Dendritic cell treated with granulocyte-macrophage colony-stimulating factor and Interleukin-4, amounts not matched to agents 40 ng/mL and 50 ng/mL, for 4 days (primary cell): ENCODE measurements at regions of chr9 and their contacts with region 1.

Region 1: DNA sequence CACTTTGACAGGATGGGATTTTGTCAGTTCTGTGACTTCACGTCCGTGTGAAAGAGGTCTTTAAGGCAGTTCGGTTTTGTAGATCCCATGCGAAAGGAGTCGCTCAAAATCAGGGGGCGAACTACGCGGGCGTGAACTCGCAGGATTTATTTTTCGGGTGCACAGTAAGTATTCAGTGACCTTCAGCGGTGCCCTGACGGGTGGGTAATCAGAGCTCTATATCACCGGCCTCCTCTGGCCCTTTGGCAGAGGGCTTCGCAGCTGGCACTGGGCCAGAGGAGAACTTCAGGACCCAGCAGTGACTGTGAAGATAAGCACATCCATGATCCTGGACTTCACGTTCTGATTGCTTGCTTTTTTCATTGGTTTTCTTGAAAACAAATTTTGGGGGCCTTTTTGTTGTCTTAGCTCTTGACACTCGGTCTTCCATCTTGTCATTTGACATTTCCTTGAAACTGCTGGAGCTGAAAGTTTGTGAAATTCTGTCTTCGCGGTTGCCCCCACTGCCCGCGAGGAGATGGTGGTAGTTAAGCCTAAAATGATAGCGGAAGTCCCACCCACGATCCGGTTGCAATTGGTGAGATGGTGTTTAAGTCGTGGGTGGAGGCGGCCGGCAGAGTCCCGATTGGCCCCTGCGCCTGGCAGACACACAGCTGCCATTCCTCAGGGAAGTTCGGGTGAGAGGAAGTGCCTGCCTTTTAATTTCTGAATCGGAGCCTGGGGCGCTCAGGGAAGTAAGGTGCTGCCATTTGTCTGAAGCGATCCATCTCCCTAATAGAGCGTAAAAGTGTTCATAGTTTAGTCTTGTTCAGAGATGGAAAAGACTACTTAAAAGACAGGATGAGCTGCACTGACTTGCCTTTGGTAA is at the start of gene FAM120AOS:
- H3K4me3 Mint-ChIP-seq: peak within 1 kb of the TSS; percentile 87
- H3K27ac Mint-ChIP-seq: peak within 1 kb of the TSS; percentile 91
- H3K4me1 Mint-ChIP-seq: peaks cover 47% of the 10 kb centered on the region
- H3K27me3 Mint-ChIP-seq: no peaks in the 10 kb centered on the region

Region 2: DNA sequence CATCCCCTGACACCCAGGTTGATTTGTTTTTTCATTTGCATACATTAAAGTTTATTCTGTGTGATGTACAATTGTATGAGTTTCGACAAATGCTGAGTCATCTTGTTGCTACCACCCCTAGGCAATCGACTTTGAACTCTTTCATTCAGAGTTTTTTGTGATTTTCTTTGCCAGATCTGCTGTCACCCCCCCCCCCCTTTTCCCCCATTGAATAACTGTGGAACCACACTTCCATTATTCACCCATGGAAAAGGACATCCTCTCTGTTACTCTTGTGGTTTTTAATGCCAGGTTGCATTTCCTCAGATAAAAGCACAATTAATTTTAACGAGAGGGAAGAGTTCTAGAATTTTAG is 13.8 kb after region 1 on chr9:
- intact Hi-C with region 1: loop called (anchors 2 kb)
- H3K4me3 Mint-ChIP-seq: no peak overlapping the region
- H3K27ac Mint-ChIP-seq: peak overlapping the region; percentile 37
- H3K4me1 Mint-ChIP-seq: peaks cover 65% of the 10 kb centered on the region
- H3K27me3 Mint-ChIP-seq: no peaks in the 10 kb centered on the region

Region 3: DNA sequence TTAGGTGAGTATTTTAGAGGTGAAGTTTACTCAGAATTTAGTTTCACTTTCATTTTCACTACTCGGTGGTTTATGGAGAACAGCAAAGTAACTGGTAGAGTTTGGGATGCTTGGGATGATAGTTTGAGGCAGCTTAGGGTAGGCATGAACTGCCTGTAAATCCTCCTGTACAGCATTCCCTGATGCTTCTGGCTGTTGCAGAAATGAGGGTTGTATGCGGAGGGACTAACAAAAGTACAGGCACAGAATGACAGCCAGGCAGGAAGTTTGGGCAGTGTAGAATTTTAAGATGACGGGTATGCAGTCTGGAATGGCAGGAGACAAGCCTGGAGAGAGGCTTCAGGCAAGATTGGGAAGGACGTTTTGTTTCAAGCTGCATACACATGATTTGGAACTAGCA is 48.1 kb after region 1 on chr9:
- intact Hi-C with region 1: loop called (anchors 1 kb)
- H3K4me3 Mint-ChIP-seq: peak overlapping the region; percentile 62
- H3K27ac Mint-ChIP-seq: peak overlapping the region; percentile 50
- H3K4me1 Mint-ChIP-seq: peaks cover 59% of the 10 kb centered on the region
- H3K27me3 Mint-ChIP-seq: no peaks in the 10 kb centered on the region

Region 4: DNA sequence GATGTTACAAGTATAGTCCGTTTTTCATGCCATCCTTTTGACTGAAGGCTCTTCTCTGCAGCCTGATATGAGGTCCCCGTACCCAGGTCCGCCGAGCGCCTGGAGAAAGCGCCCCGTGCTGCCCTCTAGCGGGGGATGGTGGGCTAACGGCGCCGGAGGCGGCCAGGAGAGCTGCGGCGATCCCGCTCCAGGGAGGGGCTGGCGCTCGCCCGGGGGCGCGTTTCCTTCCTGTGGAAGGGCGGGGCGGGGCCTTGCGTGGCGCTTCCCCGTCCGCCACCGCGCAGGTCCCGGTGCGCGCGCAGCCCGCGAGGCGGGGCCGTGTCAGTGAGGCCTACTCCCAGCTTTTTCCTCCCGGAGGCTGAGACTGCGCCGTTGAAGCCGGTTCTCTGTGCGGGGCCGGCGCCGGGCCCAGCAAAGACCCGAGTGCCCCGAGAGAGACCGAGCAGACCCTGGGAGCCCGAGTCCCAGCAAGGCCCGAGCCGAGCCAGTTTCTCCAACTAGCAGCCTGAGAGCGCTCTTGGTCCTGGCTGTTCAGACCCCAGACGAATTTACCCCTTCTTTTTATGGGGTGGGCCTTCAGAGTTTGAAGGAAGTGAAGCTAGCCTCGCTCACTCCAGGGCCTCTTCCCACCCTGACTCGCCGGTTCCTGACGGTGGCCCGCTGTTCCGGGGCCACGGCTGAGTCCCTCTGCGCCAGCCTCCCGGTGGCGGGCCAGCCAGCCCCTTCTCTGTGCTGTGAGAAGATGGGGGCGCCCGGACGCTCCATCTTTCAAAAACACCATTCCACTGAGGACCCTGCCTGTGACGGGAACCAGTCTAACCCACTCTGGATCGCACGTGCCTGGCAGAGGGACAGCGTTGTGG is 113.4 kb after region 1 on chr9:
- intact Hi-C with region 1: loop called (anchors 2 kb)
- H3K4me3 Mint-ChIP-seq: peak overlapping the region; percentile 76
- H3K27ac Mint-ChIP-seq: peak overlapping the region; percentile 91
- H3K4me1 Mint-ChIP-seq: peaks cover 41% of the 10 kb centered on the region
- H3K27me3 Mint-ChIP-seq: no peaks in the 10 kb centered on the region